Activated CD4-positive, alpha-beta memory T cell treated with anti-CD3 and anti-CD28 coated beads for 36 hours (primary cell): ENCODE measurements at regions of chr2 and their contacts with region 1.

Region 1: DNA sequence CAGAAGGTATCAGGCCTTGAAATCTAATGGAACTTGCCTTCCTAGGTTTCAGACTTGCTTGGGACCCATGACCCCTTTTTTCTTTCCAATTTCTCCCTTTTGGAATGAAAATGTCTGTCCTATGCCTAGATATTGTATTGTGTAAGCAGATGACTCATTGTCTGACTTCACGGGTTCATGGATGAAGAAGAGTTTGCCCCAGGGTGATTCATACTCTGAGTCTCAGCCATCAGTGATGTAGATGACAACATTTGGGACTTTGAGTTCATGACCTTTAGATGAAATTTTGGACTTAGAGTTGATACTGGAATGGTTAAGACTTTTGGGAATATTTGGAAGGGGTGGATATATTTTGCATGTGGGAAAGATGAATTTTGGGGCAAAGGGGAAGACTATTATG is 11.2 kb upstream of the SCYGR5 start:
- DNase-seq: no peak
- H3K4me3 Mint-ChIP-seq: no peak overlapping the region
- H3K27ac Mint-ChIP-seq: no peak overlapping the region
- H3K4me1 Mint-ChIP-seq: peaks cover 2% of the 10 kb centered on the region
- H3K27me3 Mint-ChIP-seq: peaks cover 2% of the 10 kb centered on the region

Region 2: DNA sequence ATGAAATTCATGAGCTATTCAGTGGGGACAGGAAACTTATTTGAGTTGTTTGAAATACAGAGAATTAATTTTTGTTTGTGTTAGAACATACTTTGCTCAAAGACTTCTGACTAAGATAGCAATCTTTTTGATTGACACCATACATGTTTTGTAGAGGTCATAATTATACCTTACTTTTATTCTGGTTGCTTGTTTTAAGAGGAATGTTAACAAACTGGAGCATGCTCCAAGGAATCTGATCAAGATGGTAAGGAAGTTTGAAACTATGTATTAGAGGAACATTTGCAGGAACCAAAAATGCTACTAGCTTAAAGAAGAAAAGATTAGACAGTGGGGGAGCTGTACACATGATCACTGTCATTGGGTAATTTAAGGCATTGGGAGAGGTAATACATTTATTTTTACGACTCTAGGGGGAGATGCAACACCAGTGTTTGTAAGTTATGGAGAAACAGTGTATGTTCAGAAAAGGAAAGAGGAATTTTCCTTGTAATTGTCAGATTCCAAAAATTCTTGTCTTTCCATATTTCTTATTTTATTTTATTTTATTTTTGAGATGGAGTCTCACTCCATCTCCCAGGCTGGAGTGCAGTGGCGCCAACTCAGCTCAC is 175.5 kb before region 1 on chr2:
- CTCF ChIA-PET with region 1: interaction called, 3 read pairs
- POLR2A ChIA-PET with region 1: no interaction called
- intact Hi-C with region 1: loop called (anchors 5 kb)
- DNase-seq: no peak
- H3K4me3 Mint-ChIP-seq: no peak overlapping the region
- H3K27ac Mint-ChIP-seq: peak overlapping the region; percentile 44
- H3K4me1 Mint-ChIP-seq: peaks cover 74% of the 10 kb centered on the region
- H3K27me3 Mint-ChIP-seq: no peaks in the 10 kb centered on the region

Region 3: DNA sequence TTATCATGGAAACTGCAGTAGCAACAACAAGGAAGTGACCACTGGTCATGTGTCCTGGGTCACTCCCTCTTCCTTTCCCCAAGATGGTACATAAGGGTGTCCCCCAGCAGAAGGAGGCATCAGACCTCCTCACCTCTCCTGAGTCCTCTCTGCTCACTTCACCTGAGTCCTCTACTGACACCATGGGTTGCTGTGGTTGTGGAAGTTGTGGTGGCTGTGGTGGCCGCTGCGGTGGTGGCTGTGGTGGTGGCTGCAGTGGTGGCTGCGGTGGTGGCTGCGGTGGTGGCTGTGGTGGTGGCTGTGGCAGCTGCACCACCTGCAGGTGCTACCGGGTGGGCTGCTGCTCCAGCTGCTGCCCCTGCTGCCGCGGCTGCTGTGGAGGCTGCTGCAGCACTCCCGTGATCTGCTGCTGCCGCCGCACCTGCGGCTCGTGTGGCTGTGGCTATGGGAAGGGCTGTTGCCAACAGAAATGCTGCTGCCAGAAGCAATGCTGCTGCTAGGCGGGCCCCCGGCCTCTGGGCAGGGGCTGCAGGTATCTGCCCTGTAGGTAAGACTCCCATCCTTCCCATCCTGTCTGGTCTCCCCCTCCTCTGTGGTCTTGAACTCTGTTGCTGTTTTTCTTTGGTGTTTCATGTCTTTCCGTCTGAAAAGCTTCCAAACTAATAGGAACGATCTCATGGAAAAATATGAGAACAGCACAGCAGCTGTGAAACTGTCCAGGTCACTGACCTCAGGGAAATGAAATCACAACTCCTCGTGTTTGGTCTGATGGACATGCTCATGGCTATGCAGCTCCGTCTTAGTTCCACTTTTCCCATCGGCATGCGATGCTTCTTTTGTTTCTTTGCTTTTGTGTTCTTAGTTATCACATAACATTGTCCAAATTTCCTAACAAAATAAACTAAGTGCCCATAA is 37.9 kb before region 1 on chr2 and contains the start of gene SCYGR4:
- CTCF ChIA-PET with region 1: no interaction called
- POLR2A ChIA-PET with region 1: no interaction called
- intact Hi-C with region 1: no loop called
- DNase-seq: no peak
- H3K4me3 Mint-ChIP-seq: no peak within 1 kb of the TSS
- H3K27ac Mint-ChIP-seq: no peak within 1 kb of the TSS
- H3K4me1 Mint-ChIP-seq: no peaks in the 10 kb centered on the region
- H3K27me3 Mint-ChIP-seq: peaks cover 19% of the 10 kb centered on the region
- total RNA-seq, gene SCYGR4: not detected

Region 4: DNA sequence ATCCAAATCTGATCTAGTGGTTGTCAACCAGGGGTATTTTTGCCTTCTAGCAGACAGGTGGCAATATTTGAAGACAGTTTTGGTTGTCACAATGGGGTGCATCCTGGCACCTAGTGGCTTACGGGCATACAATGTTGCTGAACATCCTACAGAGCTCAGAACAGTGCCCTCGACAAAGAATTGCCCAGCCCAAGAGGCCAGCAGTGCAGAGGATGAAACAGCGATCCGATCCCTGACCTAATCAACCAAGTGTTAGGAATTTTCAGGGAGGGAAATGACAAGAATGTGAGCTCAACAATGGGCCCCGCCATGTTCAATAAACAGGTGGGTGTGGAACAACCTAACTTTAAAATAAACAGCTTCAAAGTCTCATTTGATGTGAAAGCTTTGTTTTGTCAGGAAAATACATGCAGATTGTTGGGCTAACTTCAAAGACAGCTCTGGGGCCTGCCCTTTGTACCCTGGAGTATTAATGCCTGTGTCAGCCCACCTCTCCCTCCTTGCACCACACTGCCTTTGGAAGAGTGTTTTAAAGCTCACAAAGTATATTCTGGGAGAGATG is 11.4 kb before region 1 on chr2:
- CTCF ChIA-PET with region 1: interaction called, 12 read pairs
- POLR2A ChIA-PET with region 1: no interaction called
- intact Hi-C with region 1: no loop called
- DNase-seq: no peak
- H3K4me3 Mint-ChIP-seq: no peak overlapping the region
- H3K27ac Mint-ChIP-seq: no peak overlapping the region
- H3K4me1 Mint-ChIP-seq: no peaks in the 10 kb centered on the region
- H3K27me3 Mint-ChIP-seq: peaks cover 5% of the 10 kb centered on the region

Region 5: GRCh38 chr2:227862227-227862740 is 206.8 kb after region 1 on chr2:
- CTCF ChIA-PET with region 1: interaction called, 56 read pairs
- POLR2A ChIA-PET with region 1: no interaction called
- intact Hi-C with region 1: loop called (anchors 1 kb)
- DNase-seq: no peak
- H3K4me3 Mint-ChIP-seq: no peak overlapping the region
- H3K27ac Mint-ChIP-seq: no peak overlapping the region
- H3K4me1 Mint-ChIP-seq: no peaks in the 10 kb centered on the region
- H3K27me3 Mint-ChIP-seq: no peaks in the 10 kb centered on the region

Region 6: DNA sequence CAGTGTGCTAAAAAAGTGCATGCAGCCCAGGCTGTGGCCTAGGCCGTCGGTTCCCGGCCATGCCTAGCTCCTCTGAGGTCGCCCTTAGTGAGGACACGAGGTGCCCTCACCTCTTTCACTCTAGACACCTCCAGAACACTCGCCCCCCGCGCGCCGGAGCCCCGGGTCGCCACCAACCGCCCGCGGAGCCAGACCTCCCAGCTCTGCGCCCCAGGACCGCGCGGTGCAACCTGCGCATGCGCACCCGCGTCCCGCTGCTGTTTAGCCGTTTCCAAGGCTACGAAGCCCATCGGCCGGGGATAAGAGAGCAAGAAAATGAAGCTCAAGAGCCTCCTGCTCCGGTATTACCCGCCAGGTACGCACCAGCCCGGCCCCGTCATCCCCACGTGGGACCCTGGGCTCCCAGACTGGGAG is 215.9 kb after region 1 on chr2 and contains the start of gene DAW1:
- CTCF ChIA-PET with region 1: interaction called, 12 read pairs
- POLR2A ChIA-PET with region 1: no interaction called
- intact Hi-C with region 1: no loop called
- DNase-seq: peak; percentile 63
- H3K4me3 Mint-ChIP-seq: peak within 1 kb of the TSS; percentile 27
- H3K27ac Mint-ChIP-seq: no peak within 1 kb of the TSS
- H3K4me1 Mint-ChIP-seq: no peaks in the 10 kb centered on the region
- H3K27me3 Mint-ChIP-seq: peaks cover 29% of the 10 kb centered on the region
- total RNA-seq, gene DAW1: not detected

Region 7: DNA sequence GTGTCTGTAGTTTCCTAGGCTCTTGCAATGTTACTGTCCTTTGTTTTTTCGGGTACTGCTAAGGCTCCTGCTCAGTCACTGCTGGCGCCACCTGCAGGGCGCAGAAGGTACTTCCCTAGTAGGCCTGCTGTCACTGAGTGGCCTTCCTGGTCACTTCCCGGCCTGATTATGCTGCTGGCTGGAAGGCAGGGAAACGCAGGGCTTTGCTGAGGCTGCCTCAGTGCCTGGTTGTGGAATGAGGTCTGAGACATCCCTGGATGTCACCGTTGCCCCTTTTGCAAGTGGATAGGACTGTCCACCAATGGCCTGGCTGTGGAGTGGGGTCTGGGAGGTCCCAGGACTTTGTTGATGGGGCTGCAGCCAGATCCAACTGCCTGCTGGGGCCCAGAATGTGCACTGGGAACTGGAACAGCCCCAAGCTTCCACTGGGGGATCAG is 229.1 kb after region 1 on chr2:
- CTCF ChIA-PET with region 1: interaction called, 19 read pairs
- POLR2A ChIA-PET with region 1: no interaction called
- intact Hi-C with region 1: loop called (anchors 1 kb)
- DNase-seq: peak; percentile 74
- H3K4me3 Mint-ChIP-seq: no peak overlapping the region
- H3K27ac Mint-ChIP-seq: no peak overlapping the region
- H3K4me1 Mint-ChIP-seq: peaks cover 3% of the 10 kb centered on the region
- H3K27me3 Mint-ChIP-seq: peaks cover 2% of the 10 kb centered on the region

Region 8: DNA sequence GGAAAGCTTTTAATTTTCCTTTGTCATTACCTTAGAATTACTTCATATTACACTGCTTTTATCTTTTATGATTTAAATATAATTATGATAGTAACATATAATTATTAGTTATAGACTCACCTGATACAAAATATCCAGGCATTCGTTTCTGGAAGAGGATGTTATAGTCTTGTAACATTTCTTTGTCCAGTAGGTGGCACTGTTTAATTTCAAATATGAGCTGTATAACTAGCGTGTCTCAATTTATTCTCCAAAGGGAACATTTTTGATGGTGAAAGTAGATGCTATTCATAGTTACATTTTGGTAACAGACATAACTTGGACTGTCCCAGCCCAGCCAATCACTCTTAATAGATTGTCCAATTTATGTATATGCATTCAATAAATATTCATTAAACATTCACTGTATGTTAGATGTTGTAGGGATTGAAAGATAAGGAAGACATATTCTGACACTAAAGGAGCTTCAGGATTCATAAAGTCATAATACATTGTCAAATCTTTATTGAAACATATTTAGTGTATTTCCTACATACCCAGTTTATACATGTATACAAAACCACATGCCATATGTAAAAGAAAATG is 235.1 kb after region 1 on chr2:
- CTCF ChIA-PET with region 1: interaction called, 19 read pairs
- POLR2A ChIA-PET with region 1: no interaction called
- intact Hi-C with region 1: no loop called
- DNase-seq: no peak
- H3K4me3 Mint-ChIP-seq: no peak overlapping the region
- H3K27ac Mint-ChIP-seq: no peak overlapping the region
- H3K4me1 Mint-ChIP-seq: no peaks in the 10 kb centered on the region
- H3K27me3 Mint-ChIP-seq: no peaks in the 10 kb centered on the region